HepG2 (cell line): ENCODE measurements at regions of chr19 and their contacts with region 1.

Region 1: DNA sequence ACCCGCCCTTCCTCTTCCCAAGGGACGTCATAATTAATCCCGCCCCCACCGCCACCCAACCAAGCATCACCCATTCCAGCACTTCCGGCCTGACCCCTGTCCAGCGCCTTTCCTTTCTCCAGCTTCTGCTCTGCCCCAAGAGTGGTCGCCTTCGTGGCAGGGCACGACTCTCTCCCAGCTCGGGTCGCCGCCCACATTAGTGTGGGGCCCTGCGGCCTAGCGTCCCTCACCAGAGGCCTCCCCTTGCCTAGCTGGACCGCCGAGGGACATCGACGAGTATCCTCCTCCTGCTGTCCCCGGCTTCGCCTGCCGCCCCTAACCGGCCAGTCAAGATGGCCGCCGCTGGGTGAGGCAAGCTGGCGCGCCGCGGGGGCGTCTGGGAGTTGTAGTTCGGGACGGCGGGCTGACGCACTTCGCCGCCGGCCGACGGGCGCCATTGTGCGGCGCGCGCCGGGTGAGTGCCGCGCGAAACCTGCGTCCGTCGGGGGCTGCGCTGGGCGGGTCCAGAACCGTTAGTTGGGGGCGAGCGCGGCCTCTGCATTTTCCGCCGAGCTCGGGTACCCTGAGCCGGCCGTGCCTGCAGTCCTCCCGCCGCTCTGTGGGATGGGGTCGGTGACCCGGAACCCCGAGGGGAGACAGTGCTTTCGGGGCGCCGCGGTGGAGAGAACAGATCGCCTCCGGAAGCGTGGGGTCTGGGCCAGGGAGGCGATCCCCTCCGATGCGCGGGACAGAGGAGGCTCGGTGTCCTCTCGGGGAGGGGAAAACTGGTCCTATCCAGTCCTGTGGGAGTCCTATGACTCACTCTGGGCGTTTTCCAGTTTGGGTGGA is at the start of gene ZNF274:
- DNase-seq: peak; percentile 90
- ATAC-seq: peak; percentile 92
- H3K4me3 ChIP-seq: peak within 1 kb of the TSS; percentile 77 to 93 (median 88)
- H3K27ac ChIP-seq: peak within 1 kb of the TSS; percentile 100
- H3K4me1 ChIP-seq: peaks cover 12% of the 10 kb centered on the region
- H3K27me3 ChIP-seq: no peaks in the 10 kb centered on the region; a peak in 1 of 5 replicates
- CTCF ChIP-seq: no peak
- EP300 ChIP-seq: no peak
- POLR2A ChIP-seq: peak; percentile 55 to 77
- RAD21 ChIP-seq: peak; percentile 32; the same call in 1 of the 2 replicates
- total RNA-seq, gene ZNF274: 17.0 and 23.0 TPM in 2 replicates

Region 2: DNA sequence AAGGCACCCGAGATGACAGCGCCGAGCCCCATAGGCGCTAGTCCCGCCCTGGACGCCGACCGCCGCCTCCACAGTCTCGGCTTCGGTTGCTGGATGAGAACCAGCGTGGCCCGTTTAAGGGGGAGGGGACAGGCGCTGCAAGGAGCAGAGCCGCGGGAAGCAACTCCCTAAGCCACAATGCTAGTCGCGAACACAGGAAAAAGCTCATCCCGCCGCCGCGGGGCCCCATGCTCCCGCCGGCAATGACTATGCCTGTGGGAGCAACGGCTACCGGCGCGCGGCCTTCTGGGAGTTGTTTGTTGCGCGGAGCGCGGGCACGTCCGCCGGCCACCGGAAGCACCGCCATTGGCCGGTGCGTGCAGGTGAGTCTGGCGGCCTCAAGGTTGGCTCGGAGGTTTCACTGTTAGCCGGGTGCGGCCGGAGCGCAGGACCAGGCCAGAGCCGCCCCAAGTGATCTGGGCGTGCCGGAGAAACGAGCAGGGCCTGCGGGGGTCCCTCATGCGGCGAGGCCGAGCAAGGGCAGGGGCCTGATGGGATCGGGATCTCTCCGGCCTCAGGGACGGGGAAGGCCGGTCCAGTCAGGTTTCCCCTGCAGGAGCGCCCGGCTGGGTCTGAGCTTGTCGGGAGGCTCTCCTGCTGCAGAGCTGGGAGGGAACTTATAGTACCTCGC is 45.5 kb after region 1 on chr19 and contains the start of gene ZNF544:
- CTCF ChIA-PET with region 1: no interaction called
- POLR2A ChIA-PET with region 1: interaction called, 13 read pairs
- in situ Hi-C with region 1: no loop called
- intact Hi-C with region 1: loop called (anchors 5 kb)
- DNase-seq: peak; percentile 45
- ATAC-seq: peak; percentile 95
- H3K4me3 ChIP-seq: peak within 1 kb of the TSS; percentile 35 to 86 (median 85)
- H3K27ac ChIP-seq: peak within 1 kb of the TSS; percentile 75
- H3K4me1 ChIP-seq: peaks cover 18% of the 10 kb centered on the region
- H3K27me3 ChIP-seq: no peaks in the 10 kb centered on the region
- CTCF ChIP-seq: no peak; the same call in 1 of the 2 replicates
- EP300 ChIP-seq: no peak
- POLR2A ChIP-seq: peak; percentile 63 to 82; a peak in 3 of 4 replicates
- RAD21 ChIP-seq: no peak
- total RNA-seq, gene ZNF544: 15.6 and 17.0 TPM in 2 replicates

Region 3: GRCh38 chr19:58305065-58305931 is 122.1 kb after region 1 on chr19 and contains the start of gene ERVK3-1:
- CTCF ChIA-PET with region 1: interaction called, 11 read pairs
- POLR2A ChIA-PET with region 1: interaction called, 10 read pairs
- in situ Hi-C with region 1: loop called (anchors 5 kb)
- intact Hi-C with region 1: loop called (anchors 5 kb)
- DNase-seq: peak; percentile 96
- ATAC-seq: peak; percentile 98
- H3K4me3 ChIP-seq: peak within 1 kb of the TSS; percentile 83 to 100 (median 97)
- H3K27ac ChIP-seq: peak within 1 kb of the TSS; percentile 66
- H3K4me1 ChIP-seq: peaks cover 26% of the 10 kb centered on the region
- H3K27me3 ChIP-seq: no peaks in the 10 kb centered on the region; a peak in 1 of 5 replicates
- CTCF ChIP-seq: peak; percentile 33; the same call in 1 of the 2 replicates
- EP300 ChIP-seq: no peak
- POLR2A ChIP-seq: peak; percentile 70 to 96
- RAD21 ChIP-seq: 0 out of 2 replicates have a peak, but pooled peaks have one; percentile 8
- total RNA-seq, gene ERVK3-1: 38.7 and 39.5 TPM in 2 replicates

Region 4: GRCh38 chr19:58326914-58327726 is 143.9 kb after region 1 on chr19 and contains the start of gene ZSCAN22:
- CTCF ChIA-PET with region 1: no interaction called
- POLR2A ChIA-PET with region 1: interaction called, 4 read pairs
- in situ Hi-C with region 1: no loop called
- intact Hi-C with region 1: loop called (anchors 5 kb)
- DNase-seq: peak; percentile 93
- ATAC-seq: peak; percentile 95
- H3K4me3 ChIP-seq: peak within 1 kb of the TSS; percentile 83 to 95 (median 89)
- H3K27ac ChIP-seq: peak within 1 kb of the TSS; percentile 78
- H3K4me1 ChIP-seq: peaks cover 41% of the 10 kb centered on the region
- H3K27me3 ChIP-seq: no peaks in the 10 kb centered on the region; a peak in 1 of 5 replicates
- CTCF ChIP-seq: peak; percentile 9; the same call in 1 of the 2 replicates
- EP300 ChIP-seq: peak in 1 of 2 experiments; percentile 40; a peak in 1 of 4 replicates
- POLR2A ChIP-seq: peak; percentile 59 to 75
- RAD21 ChIP-seq: peak; percentile 54; the same call in 1 of the 2 replicates
- total RNA-seq, gene ZSCAN22: 2.5 and 3.1 TPM in 2 replicates